CD8-positive, alpha-beta memory T cell (primary cell): ENCODE measurements at regions of chr19 and their contacts with region 1.

Region 1: DNA sequence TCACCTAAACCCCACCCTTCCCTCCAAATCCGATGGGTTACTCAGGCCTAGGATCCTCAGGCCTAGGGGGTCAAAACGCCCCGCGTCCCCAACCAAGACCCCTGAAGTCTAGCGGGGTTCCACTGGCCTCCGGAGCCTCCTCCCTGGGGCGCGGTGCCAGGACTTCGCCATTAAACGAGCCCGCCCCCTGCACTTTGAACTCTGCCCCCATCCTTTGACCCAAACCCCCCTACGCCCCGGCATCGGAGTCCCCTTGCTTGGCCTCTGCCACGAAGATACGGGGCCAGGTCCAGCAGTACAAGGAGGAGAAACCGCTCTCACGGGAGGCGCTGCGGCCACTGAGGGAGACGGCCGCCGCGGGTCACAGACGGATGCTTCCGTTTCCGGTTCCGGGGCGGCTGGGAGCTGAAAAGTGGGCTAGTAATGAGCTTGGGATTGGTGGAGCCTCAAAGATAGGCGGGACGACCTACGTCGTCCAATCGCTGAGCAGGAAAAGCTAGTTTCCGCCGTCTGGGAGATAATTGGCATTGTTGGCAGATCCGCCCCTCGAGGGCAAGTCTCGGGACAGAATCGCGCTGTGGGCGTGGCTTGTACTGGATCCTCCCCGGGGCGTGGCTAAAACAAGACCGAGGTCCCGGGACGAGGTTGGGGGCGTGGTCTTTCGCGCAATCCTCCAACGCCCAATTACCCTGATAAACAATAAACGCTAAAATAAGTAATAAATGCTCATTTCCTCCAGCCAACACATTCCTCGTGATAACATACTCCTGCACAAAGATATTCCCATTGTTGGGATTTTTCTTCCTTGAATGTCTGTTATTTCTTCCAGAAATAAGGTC is 5.7 kb upstream of the ZNF77 start:
- DNase-seq: peak; percentile 100
- H3K4me3 ChIP-seq: peak overlapping the region; percentile 83
- H3K4me3 Mint-ChIP-seq: peak overlapping the region; percentile 91 to 99 (median 97)
- H3K27ac ChIP-seq: peak overlapping the region; percentile 92
- H3K27ac Mint-ChIP-seq: peak overlapping the region; percentile 88 to 100 (median 99)
- H3K4me1 ChIP-seq: peaks cover 12% of the 10 kb centered on the region
- H3K4me1 Mint-ChIP-seq: peaks cover 30 to 39% (median 31%) of the 10 kb centered on the region in 3 donors
- H3K27me3 ChIP-seq: no peaks in the 10 kb centered on the region
- H3K27me3 Mint-ChIP-seq: peaks cover 0 to 3% of the 10 kb centered on the region in 2 donors

Region 2: DNA sequence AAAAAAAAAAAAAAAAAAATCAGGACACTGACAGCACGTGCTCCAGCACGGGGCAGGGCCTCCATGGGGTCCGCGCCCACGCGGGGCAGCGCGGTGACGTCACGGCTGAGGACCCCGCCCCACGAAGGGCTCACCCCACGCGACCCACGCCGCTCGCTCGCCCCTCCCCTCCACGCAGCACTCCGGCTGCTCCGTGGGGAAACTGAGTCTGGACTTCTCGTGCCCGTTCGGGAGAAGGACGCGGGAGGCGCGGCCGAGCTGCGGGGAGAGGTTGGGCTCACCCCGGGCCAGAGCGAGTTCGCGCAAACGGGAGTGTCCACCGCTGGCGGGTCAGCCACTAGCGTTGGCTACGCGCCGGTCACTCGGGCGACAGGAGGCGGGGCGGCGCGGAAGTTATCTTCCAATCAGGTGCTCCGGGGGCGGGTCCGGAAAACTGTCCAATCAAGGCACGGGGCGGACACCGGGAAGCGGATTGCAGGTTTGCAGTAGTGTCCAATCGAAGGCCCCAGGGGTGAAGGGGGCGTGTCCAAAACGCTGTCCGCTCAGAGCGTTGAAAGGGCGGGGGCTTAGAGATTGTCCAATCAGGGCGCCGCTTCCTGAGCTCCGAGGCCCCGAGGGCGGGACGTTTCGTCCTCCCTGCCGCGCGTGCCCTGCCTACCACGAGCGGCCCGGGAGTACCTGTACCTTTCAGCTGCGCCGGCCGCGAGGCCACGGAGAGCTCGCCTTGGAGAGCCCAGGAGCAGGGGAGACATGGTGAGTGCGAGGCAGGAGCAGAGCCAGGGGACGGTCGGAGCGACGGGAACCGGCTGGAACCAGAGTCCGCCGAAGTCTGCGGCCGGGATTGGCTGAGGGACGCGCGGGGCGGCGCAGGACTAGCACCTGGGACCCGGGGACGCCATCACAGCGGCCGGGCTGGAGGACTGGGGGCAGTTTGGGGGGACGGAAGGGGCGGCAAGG is 49.9 kb before region 1 on chr19 and contains the start of gene ZNF57:
- CTCF ChIA-PET with region 1: no interaction called
- POLR2A ChIA-PET with region 1: interaction called, 10 read pairs
- DNase-seq: peak; percentile 94 to 98 (median 96)
- H3K4me3 ChIP-seq: peak within 1 kb of the TSS; percentile 79
- H3K4me3 Mint-ChIP-seq: peak within 1 kb of the TSS; percentile 87 to 98 (median 96)
- H3K27ac ChIP-seq: peak within 1 kb of the TSS; percentile 47
- H3K27ac Mint-ChIP-seq: peak within 1 kb of the TSS; percentile 65 to 93 (median 87)
- H3K4me1 ChIP-seq: peaks cover 8% of the 10 kb centered on the region
- H3K4me1 Mint-ChIP-seq: peaks cover 15 to 26% (median 26%) of the 10 kb centered on the region in 3 donors
- H3K27me3 ChIP-seq: no peaks in the 10 kb centered on the region
- H3K27me3 Mint-ChIP-seq: peaks cover 0 to 1% of the 10 kb centered on the region in 2 donors
- total RNA-seq, gene ZNF57: 4.4 TPM

Region 3: GRCh38 chr19:2917275-2918184 is 33.0 kb before region 1 on chr19:
- CTCF ChIA-PET with region 1: no interaction called
- POLR2A ChIA-PET with region 1: no interaction called
- DNase-seq: no peak
- H3K4me3 ChIP-seq: no peak overlapping the region
- H3K4me3 Mint-ChIP-seq: no peak overlapping the region
- H3K27ac ChIP-seq: no peak overlapping the region
- H3K27ac Mint-ChIP-seq: peak overlapping the region in 2 of 8 donors; percentile 38 to 46
- H3K4me1 ChIP-seq: no peaks in the 10 kb centered on the region
- H3K4me1 Mint-ChIP-seq: peaks cover 0 to 1% (median 0%) of the 10 kb centered on the region in 3 donors
- H3K27me3 ChIP-seq: no peaks in the 10 kb centered on the region
- H3K27me3 Mint-ChIP-seq: no peaks in the 10 kb centered on the region

Region 4: GRCh38 chr19:2977001-2977685 is 26.6 kb after region 1 on chr19 and contains the start of gene TLE6:
- CTCF ChIA-PET with region 1: interaction called, 17 read pairs
- POLR2A ChIA-PET with region 1: no interaction called
- DNase-seq: peak; percentile 81 to 94 (median 90)
- H3K4me3 ChIP-seq: peak within 1 kb of the TSS; percentile 76
- H3K4me3 Mint-ChIP-seq: peak within 1 kb of the TSS; percentile 83 to 95 (median 92)
- H3K27ac ChIP-seq: peak within 1 kb of the TSS; percentile 40
- H3K27ac Mint-ChIP-seq: peak within 1 kb of the TSS in 7 of 8 donors; percentile 37 to 91 (median 78)
- H3K4me1 ChIP-seq: peaks cover 9% of the 10 kb centered on the region
- H3K4me1 Mint-ChIP-seq: peaks cover 15 to 20% (median 16%) of the 10 kb centered on the region in 3 donors
- H3K27me3 ChIP-seq: no peaks in the 10 kb centered on the region
- H3K27me3 Mint-ChIP-seq: peaks cover 18 to 19% of the 10 kb centered on the region in 2 donors
- total RNA-seq, gene TLE6: 1.1 to 1.3 TPM

Region 5: GRCh38 chr19:3062168-3063102 is 111.9 kb after region 1 on chr19 and contains the start of gene TLE5:
- CTCF ChIA-PET with region 1: interaction called, 9 read pairs
- POLR2A ChIA-PET with region 1: interaction called, 16 read pairs
- DNase-seq: peak; percentile 67 to 85 (median 75)
- H3K4me3 ChIP-seq: peak within 1 kb of the TSS; percentile 97
- H3K4me3 Mint-ChIP-seq: peak within 1 kb of the TSS; percentile 89 to 96 (median 91)
- H3K27ac ChIP-seq: peak within 1 kb of the TSS; percentile 79
- H3K27ac Mint-ChIP-seq: peak within 1 kb of the TSS; percentile 87 to 99 (median 94)
- H3K4me1 ChIP-seq: peaks cover 49% of the 10 kb centered on the region
- H3K4me1 Mint-ChIP-seq: peaks cover 29 to 42% (median 40%) of the 10 kb centered on the region in 3 donors
- H3K27me3 ChIP-seq: no peaks in the 10 kb centered on the region
- H3K27me3 Mint-ChIP-seq: no peaks in the 10 kb centered on the region
- total RNA-seq, gene TLE5: 335 to 352 TPM

Region 6: DNA sequence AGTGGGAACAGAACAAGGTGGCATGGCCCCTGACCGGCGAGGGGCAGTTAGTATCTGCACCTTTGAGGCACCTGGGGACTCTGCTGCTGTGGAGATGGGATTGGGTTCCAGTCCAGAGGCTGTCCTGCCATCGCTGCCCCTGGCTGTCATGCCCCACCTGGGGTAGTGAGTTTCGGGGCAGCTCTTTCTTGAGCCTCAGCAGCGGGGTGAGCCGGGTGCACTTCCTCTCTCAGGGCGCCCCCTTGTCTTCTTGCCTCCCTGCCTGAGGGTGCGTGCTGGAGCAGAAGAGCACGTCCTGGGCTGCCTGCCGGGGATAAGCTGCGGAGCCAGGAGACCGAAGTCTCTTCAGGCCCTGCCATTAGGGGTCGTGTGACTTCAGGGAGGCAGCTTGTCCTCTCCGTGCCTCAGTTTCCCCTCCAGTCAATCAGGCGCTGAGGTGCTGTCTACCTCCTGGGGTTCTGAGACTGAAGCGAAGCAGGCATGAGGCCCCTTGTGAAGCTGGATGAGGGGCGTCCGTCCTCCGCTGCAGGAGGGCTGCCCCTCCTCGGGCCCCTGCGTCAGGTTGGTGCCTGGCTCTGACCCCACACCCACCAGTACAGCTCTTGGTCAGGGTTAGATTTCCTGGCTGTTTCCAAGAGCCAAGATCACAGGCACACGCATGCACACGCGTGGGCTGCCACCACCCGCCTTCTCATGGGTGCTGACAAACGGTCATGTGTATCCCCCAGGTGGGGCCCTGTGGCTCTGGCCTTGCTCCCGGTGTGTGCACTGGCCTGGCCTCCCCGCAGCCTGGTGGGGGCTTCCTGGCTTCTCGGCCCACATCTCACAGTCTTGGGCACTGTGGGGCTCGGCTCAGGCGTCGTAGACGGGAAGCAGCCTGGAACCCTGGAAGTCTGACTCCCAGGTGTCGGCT is 152.0 kb after region 1 on chr19:
- CTCF ChIA-PET with region 1: interaction called, 74 read pairs
- POLR2A ChIA-PET with region 1: interaction called, 11 read pairs
- DNase-seq: no peak
- H3K4me3 ChIP-seq: no peak overlapping the region
- H3K4me3 Mint-ChIP-seq: no peak overlapping the region
- H3K27ac ChIP-seq: no peak overlapping the region
- H3K27ac Mint-ChIP-seq: no peak overlapping the region
- H3K4me1 ChIP-seq: peaks cover 19% of the 10 kb centered on the region
- H3K4me1 Mint-ChIP-seq: peaks cover 9 to 13% (median 13%) of the 10 kb centered on the region in 3 donors
- H3K27me3 ChIP-seq: no peaks in the 10 kb centered on the region
- H3K27me3 Mint-ChIP-seq: peaks cover 13 to 18% of the 10 kb centered on the region in 2 donors